BJ (cell line): ENCODE measurements at regions of chr5 and their contacts with region 1.

Region 1: GRCh38 chr5:36202521-36202961 is 39.2 kb downstream of the NADK2 start:
- DNase-seq: peak; percentile 15
- H3K4me3 ChIP-seq: no peak overlapping the region
- H3K27me3 ChIP-seq: no peaks in the 10 kb centered on the region
- CTCF ChIP-seq: no peak

Region 2: GRCh38 chr5:36228505-36228904 is 26.0 kb after region 1 on chr5:
- CTCF ChIA-PET with region 1: no interaction called
- POLR2A ChIA-PET with region 1: no interaction called
- DNase-seq: no peak
- H3K4me3 ChIP-seq: no peak overlapping the region
- H3K27me3 ChIP-seq: no peaks in the 10 kb centered on the region
- CTCF ChIP-seq: no peak

Region 3: GRCh38 chr5:36305571-36306326 is 103.2 kb after region 1 on chr5:
- CTCF ChIA-PET with region 1: interaction called, 3 read pairs
- POLR2A ChIA-PET with region 1: interaction called, 10 read pairs
- DNase-seq: no peak
- H3K4me3 ChIP-seq: no peak overlapping the region
- H3K27me3 ChIP-seq: no peaks in the 10 kb centered on the region; the same call in 1 of the 2 replicates
- CTCF ChIP-seq: peak; percentile 80